Thyroid gland (tissue), 4 donors: ENCODE measurements at regions of chr10 and their contacts with region 1.

Region 1: GRCh38 chr10:45235798-45236231 is 79.6 kb downstream of the OR13A1 start:
- DNase-seq: peak in 1 of 2 donors; percentile 10
- H3K4me3 ChIP-seq: no peak overlapping the region
- H3K27ac ChIP-seq: no peak overlapping the region
- H3K4me1 ChIP-seq: no peaks in the 10 kb centered on the region
- H3K27me3 ChIP-seq: no peaks in the 10 kb centered on the region
- CTCF ChIP-seq: no peak
- POLR2A ChIP-seq: no peak

Region 2: DNA sequence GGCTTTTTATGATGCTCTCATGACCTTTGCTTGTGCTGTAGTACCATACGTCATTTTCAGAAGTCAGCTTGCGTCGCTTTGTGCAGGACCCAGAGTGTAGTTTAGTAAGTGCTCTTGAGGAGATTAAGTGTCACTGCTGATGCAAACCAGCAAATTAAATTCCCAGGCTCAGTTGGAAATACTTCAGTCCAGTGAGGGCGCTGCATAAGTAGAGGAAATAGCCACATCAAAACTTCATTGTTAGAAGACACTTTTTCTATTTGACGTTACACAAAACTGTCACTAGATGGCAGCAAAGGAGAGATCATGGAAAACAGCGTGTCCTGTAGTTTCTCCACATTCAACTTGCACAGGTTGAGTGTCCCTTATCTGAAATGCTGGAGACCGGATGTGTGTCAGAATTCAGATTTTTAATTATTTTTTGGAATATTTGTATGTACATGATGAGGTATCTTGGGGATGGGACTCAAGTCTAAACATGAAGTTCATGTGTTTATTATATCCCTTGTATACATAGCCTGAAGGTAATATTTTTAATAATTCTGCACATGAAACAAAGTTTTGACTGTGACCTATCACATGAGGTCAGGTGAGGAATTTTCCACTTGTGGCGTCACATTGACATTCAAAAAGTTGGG is 227.2 kb before region 1 on chr10:
- intact Hi-C with region 1: loop called (anchors 10 kb)
- DNase-seq: peak; percentile 63 to 73
- H3K4me3 ChIP-seq: no peak overlapping the region
- H3K27ac ChIP-seq: peak overlapping the region in 2 of 3 donors; percentile 54 to 58
- H3K4me1 ChIP-seq: peaks cover 6 to 11% of the 10 kb centered on the region in 2 donors
- H3K27me3 ChIP-seq: no peaks in the 10 kb centered on the region
- CTCF ChIP-seq: peak; percentile 61 to 95 (median 78)
- POLR2A ChIP-seq: no peak